Pancreas (tissue), 10 donors: ENCODE measurements at regions of chr15 and their contacts with region 1.

Region 1: GRCh38 chr15:23565395-23566070 is at the start of gene MKRN3:
- DNase-seq: peak in 3 of 6 donors; percentile 20 to 57 (median 46)
- ATAC-seq: no peak
- H3K4me3 ChIP-seq: peak within 1 kb of the TSS in 1 of 4 donors; percentile 6
- H3K27ac ChIP-seq: no peak within 1 kb of the TSS
- H3K4me1 ChIP-seq: peaks cover 1 to 11% (median 6%) of the 10 kb centered on the region in 3 donors
- H3K27me3 ChIP-seq: no peaks in the 10 kb centered on the region
- CTCF ChIP-seq: no peak
- total RNA-seq, gene MKRN3: 0.43 to 2.1 TPM in 2 of 6 donors, not detected in the others

Region 2: GRCh38 chr15:23629234-23629805 is 63.8 kb after region 1 on chr15:
- intact Hi-C with region 1: loop called in 1 of 3 experiments (anchors 10 kb)
- DNase-seq: no peak
- ATAC-seq: peak in 3 of 4 donors; percentile 52 to 80 (median 79)
- H3K4me3 ChIP-seq: no peak overlapping the region
- H3K27ac ChIP-seq: no peak overlapping the region
- H3K4me1 ChIP-seq: no peaks in the 10 kb centered on the region
- H3K27me3 ChIP-seq: no peaks in the 10 kb centered on the region
- CTCF ChIP-seq: peak in 3 of 4 donors; percentile 17 to 46 (median 36)

Region 3: GRCh38 chr15:23773093-23773492 is 207.6 kb after region 1 on chr15:
- intact Hi-C with region 1: no loop called
- DNase-seq: no peak
- ATAC-seq: no peak
- H3K4me3 ChIP-seq: no peak overlapping the region
- H3K27ac ChIP-seq: no peak overlapping the region
- H3K4me1 ChIP-seq: no peaks in the 10 kb centered on the region
- H3K27me3 ChIP-seq: no peaks in the 10 kb centered on the region
- CTCF ChIP-seq: no peak